Activated naive CD8-positive, alpha-beta T cell treated with anti-CD3 and anti-CD28 coated beads, Interleukin-2, amount 10 ng/mL, durations not matched to agents 7 days and 5 days (primary cell): ENCODE measurements at regions of chr19 and their contacts with region 1.

Region 1: GRCh38 chr19:7680606-7681339 is at the start of gene TRAPPC5:
- DNase-seq: peak; percentile 97
- ATAC-seq: peak; percentile 70
- H3K4me3 Mint-ChIP-seq: peak within 1 kb of the TSS; percentile 94
- H3K27ac Mint-ChIP-seq: peak within 1 kb of the TSS; percentile 95
- H3K4me1 Mint-ChIP-seq: peaks cover 39% of the 10 kb centered on the region
- H3K27me3 Mint-ChIP-seq: peaks cover 13% of the 10 kb centered on the region
- total RNA-seq, gene TRAPPC5: 74.4 to 79.8 TPM

Region 2: GRCh38 chr19:7562646-7563393 is 118.0 kb before region 1 on chr19:
- POLR2A ChIA-PET with region 1: interaction called, 11 read pairs
- DNase-seq: peak; percentile 60
- ATAC-seq: no peak
- H3K4me3 Mint-ChIP-seq: no peak overlapping the region
- H3K27ac Mint-ChIP-seq: no peak overlapping the region
- H3K4me1 Mint-ChIP-seq: peaks cover 5% of the 10 kb centered on the region
- H3K27me3 Mint-ChIP-seq: no peaks in the 10 kb centered on the region

Region 3: DNA sequence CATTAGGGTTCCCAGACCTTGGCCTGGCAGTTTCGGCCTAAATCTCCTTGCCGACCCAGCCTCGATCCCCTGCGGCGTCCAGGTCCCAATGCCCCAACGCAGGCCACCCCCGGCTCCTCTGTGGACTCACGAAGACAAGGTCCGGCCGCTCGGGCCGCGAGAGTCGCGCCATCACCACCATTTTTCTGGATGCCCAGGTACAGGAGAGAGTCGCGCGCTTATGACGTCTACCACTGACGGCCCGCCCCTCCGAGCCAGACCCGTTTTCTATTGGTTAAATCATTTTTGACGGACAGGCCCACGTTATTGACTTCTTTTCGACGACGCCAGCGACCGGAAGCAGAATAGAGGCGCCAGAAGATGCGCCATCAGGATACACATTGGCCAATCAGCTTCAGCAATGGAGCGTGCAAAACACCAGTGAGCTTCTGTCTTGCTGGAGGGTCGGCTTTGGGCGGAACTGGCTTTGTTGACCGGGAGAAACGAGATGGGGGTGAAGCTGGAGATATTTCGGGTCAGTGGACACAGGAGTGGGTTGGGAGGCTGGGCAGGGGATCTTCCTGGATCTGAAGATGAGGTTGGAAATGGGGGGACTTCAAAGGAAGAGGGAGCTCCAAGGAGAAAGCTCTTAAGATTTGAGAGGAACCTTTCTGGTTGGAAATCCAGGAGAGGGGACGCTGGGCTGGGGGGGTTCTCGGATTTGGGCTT is 51.3 kb before region 1 on chr19 and contains the starts of genes PET100 and XAB2:
- POLR2A ChIA-PET with region 1: interaction called, 16 read pairs
- DNase-seq: peak; percentile 91
- ATAC-seq: peak; percentile 98
- H3K4me3 Mint-ChIP-seq: peak within 1 kb of the TSS; percentile 98
- H3K27ac Mint-ChIP-seq: peak within 1 kb of the TSS; percentile 100
- H3K4me1 Mint-ChIP-seq: peaks cover 28% of the 10 kb centered on the region
- H3K27me3 Mint-ChIP-seq: no peaks in the 10 kb centered on the region
- total RNA-seq, gene PET100: 134 to 158 TPM
- total RNA-seq, gene XAB2: 53.5 to 58.1 TPM

Region 4: GRCh38 chr19:7636691-7637373 is 43.9 kb before region 1 on chr19 and contains the start of gene STXBP2:
- POLR2A ChIA-PET with region 1: interaction called, 10 read pairs
- DNase-seq: peak; percentile 97
- ATAC-seq: peak; percentile 92
- H3K4me3 Mint-ChIP-seq: peak within 1 kb of the TSS; percentile 86
- H3K27ac Mint-ChIP-seq: peak within 1 kb of the TSS; percentile 93
- H3K4me1 Mint-ChIP-seq: peaks cover 15% of the 10 kb centered on the region
- H3K27me3 Mint-ChIP-seq: no peaks in the 10 kb centered on the region
- total RNA-seq, gene STXBP2: 170 to 189 TPM

Region 5: GRCh38 chr19:7692417-7693088 is 11.8 kb after region 1 on chr19:
- POLR2A ChIA-PET with region 1: no interaction called
- DNase-seq: no peak
- ATAC-seq: no peak
- H3K4me3 Mint-ChIP-seq: no peak overlapping the region
- H3K27ac Mint-ChIP-seq: no peak overlapping the region
- H3K4me1 Mint-ChIP-seq: no peaks in the 10 kb centered on the region
- H3K27me3 Mint-ChIP-seq: no peaks in the 10 kb centered on the region